ENCODE measurements at regions of chr1 and their contacts with region 1.

Region 1: DNA sequence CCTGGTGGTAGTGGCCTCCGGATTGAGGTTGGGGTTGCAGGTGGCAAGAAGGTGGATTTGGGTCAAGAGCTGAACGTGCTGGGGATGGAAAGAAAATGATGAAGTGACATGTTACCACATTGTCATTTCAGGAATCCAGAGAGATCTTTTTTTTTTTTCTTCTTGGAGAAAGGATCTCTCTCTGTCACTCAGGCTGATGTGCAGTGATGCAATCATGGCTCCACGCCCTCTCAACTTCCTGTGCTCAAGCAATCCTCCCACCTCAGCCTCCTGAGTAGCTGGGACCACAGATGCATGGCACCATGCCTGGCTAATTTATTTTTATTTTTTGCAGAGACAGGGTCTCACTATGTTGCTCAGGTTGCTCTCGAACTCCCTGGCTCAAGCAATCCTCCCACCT is 80.6 kb downstream of the GON4L start:
- DNase-seq: no peak
- ATAC-seq: no peak

Region 2: GRCh38 chr1:155646307-155646706 is 130.1 kb before region 1 on chr1:
- intact Hi-C with region 1: no loop called
- DNase-seq: peak; percentile 70
- ATAC-seq: peak; percentile 53

Region 3: GRCh38 chr1:155729031-155729898 is 47.1 kb before region 1 on chr1:
- intact Hi-C with region 1: no loop called
- DNase-seq: no peak
- ATAC-seq: no peak

Region 4: DNA sequence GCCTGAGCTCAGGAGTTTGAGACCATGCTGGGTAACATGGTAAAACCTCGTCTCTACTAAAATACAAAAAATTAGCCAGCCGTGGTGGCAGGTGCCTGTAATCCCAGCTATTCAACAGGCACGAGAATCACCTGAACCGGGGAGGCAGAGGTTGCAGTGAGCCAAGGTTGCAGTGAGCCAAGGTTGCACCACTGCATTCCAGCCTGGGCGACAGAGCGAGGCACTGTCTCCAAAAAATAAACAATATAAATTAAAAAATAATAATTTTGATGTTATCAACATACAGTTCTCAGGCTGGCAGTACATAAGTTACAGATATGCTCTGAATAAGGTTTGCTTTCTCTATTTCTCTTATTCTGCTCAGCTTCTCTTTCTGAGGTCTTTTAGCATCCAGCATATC is 53.0 kb after region 1 on chr1:
- intact Hi-C with region 1: loop called (anchors 10 kb)
- DNase-seq: no peak
- ATAC-seq: no peak

Region 5: DNA sequence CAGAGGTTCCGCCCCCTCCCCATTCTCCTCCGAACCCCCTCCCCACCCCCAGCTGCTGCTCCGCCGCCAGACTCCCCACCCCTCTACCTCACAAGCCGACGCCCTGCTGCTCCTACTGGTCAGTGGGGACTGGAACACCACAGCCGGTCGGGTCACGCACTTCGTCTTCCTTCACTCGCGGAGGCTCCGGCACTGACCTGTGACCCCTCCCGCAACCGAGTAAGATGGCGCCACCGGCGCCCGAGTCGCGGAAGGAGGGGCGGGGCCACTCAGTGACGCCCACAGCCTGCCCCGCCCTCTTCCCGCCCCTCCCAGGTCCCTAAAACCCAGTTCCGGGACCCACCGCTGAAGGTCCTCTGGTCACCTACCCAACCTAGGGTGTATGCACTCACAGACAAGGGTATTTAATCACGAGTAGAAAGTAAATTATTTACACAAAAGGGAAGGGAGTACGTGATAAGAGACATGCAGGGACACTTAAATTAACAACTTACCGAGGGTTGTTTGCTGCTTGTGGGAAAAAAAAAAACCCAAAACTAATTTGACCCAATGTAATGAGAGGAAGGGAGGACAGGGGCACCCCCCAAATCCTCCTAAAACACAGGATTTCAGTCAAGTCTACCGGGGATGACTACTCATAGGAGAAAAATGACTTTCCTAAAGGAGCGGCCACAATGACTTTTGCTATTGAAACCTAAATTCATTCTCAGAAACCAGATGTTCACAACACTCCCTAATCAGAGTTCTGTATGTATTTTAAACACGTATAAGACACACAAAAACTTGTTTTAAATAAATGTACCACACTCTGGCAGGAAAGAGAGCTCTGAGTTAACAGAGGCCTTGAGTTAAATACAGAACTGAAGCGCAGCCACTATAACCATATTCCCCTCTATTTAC is 135.0 kb after region 1 on chr1 and contains the start of gene RIT1:
- intact Hi-C with region 1: loop called (anchors 10 kb)
- DNase-seq: peak; percentile 93
- ATAC-seq: peak; percentile 99
- total RNA-seq, gene RIT1: 19.0 TPM

Region 6: GRCh38 chr1:155989242-155990004 is 213.0 kb after region 1 on chr1:
- intact Hi-C with region 1: no loop called
- DNase-seq: peak; percentile 82
- ATAC-seq: peak; percentile 94